OCI-LY7 (cell line): ENCODE measurements at regions of chr5 and their contacts with region 1.

Region 1: GRCh38 chr5:60649283-60649917 is 50.6 kb downstream of the DEPDC1B start:
- DNase-seq: peak; percentile 68
- H3K4me3 ChIP-seq: no peak overlapping the region
- H3K27ac ChIP-seq: no peak overlapping the region
- H3K4me1 ChIP-seq: no peaks in the 10 kb centered on the region
- CTCF ChIP-seq: peak; percentile 90

Region 2: GRCh38 chr5:60295423-60295822 is 354.0 kb before region 1 on chr5:
- CTCF ChIA-PET with region 1: no interaction called
- POLR2A ChIA-PET with region 1: no interaction called
- intact Hi-C with region 1: loop called (anchors 10 kb)
- DNase-seq: peak; percentile 29
- H3K4me3 ChIP-seq: no peak overlapping the region
- H3K27ac ChIP-seq: no peak overlapping the region
- H3K4me1 ChIP-seq: no peaks in the 10 kb centered on the region
- CTCF ChIP-seq: peak; percentile 67

Region 3: DNA sequence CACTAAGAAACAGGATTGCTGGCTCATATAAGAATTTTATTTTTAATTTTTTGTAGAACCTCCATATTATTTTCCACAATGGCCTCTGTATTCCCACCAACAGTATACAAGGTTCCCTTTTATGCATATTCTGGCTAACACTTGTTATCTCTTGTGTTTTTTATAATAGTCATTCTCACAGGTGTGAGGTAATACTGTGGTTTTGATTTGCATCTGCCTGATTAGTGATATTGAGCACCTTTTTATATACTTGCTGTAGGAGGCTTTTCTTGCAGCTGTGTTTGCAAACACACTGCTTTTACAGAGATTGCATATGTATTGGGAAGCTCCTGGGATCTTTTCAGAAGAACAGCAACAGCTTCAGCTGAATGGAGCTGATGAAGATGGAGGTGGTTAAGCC is 114.2 kb before region 1 on chr5:
- CTCF ChIA-PET with region 1: no interaction called
- POLR2A ChIA-PET with region 1: no interaction called
- intact Hi-C with region 1: loop called (anchors 5 kb)
- DNase-seq: no peak
- H3K4me3 ChIP-seq: no peak overlapping the region
- H3K27ac ChIP-seq: no peak overlapping the region
- H3K4me1 ChIP-seq: peaks cover 30% of the 10 kb centered on the region
- CTCF ChIP-seq: no peak